HEK293 (cell line): ENCODE measurements at regions of chr20 and their contacts with region 1.

Region 1: DNA sequence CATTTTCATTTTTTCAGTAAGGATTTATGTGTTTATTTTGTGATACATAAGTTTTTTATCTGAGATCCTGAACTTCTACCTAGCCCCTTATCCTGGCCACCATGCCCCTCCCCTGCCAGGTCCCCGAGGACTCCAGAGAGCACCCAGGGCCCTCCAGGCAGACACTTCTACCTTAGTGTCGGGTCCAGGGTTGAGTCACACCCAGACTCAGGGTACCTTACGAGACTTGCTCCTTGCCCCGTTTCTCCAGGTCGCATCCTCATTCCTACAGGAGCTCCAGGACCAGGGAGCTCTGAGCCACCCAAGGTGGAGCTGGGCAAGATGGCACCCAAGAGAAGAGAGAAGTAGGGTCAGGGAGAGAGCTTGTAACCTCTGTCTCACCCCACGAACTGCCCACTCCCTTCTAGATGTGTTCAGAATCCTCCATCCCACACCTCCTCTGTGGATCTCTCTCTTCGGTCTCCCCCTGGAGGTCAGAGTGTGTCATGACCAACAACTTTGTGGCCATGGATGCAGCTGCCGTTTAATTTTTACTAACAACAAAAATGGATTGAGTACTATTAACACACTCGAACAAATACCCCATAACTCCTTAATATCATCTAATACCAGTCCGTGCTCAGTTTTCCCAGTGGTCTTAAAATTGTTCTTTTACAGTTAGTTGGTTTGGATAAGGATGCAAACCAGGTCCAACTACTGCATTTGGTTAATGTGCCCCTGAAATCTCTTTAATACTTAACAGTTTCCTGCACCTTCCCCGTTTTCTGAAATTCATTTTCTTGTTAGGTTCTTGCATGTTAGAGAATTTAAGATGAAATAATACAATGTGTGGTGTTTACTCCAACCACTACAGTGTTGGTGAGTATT is 130.6 kb upstream of the INSM1 start:
- H3K4me3 ChIP-seq: no peak overlapping the region
- H3K27ac ChIP-seq: no peak overlapping the region
- H3K4me1 ChIP-seq: no peaks in the 10 kb centered on the region
- CTCF ChIP-seq: no peak

Region 2: DNA sequence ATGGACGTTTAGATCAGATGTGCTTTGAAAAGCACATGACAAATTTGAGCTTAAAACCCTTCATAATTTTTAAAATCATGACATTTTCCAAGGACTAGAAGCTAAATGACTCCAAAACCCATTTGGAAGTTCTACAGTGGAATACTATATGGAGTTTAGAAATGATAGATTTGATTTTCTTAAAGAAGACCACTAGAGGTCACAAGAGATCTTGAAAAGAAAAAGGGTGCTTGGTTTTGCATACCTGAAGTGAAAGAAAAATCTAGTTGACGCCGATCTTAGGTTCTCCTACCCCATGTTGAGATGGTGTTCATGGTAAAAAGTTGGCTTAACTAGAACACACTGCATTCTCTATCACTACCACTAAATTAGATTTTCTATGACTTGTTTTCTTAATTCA is 153.5 kb before region 1 on chr20:
- CTCF ChIA-PET with region 1: interaction called, 47 read pairs
- POLR2A ChIA-PET with region 1: no interaction called
- H3K4me3 ChIP-seq: no peak overlapping the region
- H3K27ac ChIP-seq: no peak overlapping the region
- H3K4me1 ChIP-seq: no peaks in the 10 kb centered on the region
- CTCF ChIP-seq: 0 out of 2 replicates have a peak, but pooled peaks have one; percentile 28

Region 3: DNA sequence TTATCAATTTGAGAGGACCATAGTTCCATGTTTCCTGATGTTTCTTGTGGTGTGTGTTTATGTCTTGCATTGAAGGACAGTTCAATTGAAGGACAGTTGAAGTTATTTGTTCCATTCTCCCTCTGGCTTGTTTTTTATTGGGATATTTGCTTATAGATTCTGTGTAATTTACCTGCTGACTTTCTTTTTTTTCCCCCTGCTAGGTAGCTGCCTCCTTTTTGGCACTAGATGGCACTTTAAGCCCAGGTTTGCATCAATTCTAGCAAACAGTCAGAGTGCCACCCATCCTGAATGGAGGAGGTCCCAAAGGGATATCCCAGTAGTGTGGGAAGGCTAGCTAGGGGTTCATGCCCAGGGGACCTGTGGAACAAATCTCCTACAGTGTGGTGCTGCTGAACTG is 106.9 kb before region 1 on chr20:
- CTCF ChIA-PET with region 1: interaction called, 26 read pairs
- POLR2A ChIA-PET with region 1: no interaction called
- H3K4me3 ChIP-seq: no peak overlapping the region
- H3K27ac ChIP-seq: no peak overlapping the region
- H3K4me1 ChIP-seq: no peaks in the 10 kb centered on the region
- CTCF ChIP-seq: peak; percentile 62; the same call in 1 of the 2 replicates

Region 4: DNA sequence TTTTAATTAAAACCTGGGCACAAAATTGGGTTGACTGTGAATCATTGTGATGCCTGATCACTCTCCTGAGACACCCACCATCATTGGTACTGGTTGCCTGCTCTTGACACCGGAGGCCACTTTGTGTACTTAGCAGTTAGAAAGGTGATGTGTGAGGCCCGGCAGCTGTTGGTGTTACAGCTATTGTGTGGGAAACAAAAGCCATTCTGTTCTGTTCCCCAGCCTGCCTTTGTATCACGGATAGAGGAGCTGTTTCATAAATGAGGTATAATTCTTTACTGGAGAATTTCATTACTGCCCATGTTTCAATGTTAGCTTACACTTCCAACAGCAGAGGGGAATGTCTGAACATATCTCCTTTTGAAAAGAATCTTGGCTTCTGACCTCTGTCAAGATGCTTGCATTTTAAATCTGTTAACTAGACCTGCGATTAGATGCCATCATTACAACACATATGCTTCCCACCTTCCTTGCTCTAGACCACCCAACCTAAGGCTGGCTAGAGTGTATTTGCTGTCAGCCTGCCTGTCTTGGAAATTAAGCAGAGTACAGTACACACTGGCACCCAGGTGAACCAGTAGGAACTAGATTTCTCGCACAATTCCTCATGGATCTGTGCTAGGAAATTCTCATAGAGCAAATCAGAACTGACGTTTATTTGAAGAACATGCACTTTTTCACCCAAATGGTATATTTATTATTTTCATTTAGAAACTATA is 11.8 kb before region 1 on chr20:
- CTCF ChIA-PET with region 1: interaction called, 22 read pairs
- POLR2A ChIA-PET with region 1: no interaction called
- H3K4me3 ChIP-seq: no peak overlapping the region
- H3K27ac ChIP-seq: no peak overlapping the region
- H3K4me1 ChIP-seq: no peaks in the 10 kb centered on the region
- CTCF ChIP-seq: no peak

Region 5: DNA sequence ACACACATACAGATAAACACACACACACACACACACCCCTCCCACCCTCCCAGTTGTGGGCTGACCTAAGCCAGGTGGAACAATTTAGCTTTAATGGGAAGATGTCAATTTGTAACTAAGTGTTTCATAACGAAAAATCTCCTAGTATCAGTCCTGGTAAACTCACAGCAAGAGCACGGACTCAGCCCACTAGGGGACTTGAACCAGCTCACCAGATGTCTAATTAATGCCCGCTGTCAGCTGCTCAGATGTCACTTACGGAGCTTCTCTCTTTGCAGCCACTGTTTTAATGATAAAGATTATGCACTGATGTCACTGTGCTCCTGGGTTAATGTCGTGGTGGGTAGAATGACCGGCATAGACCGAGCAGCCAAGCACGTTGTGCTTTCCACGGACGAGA is 14.0 kb after region 1 on chr20:
- CTCF ChIA-PET with region 1: interaction called, 21 read pairs
- POLR2A ChIA-PET with region 1: no interaction called
- H3K4me3 ChIP-seq: no peak overlapping the region
- H3K27ac ChIP-seq: no peak overlapping the region
- H3K4me1 ChIP-seq: no peaks in the 10 kb centered on the region
- CTCF ChIP-seq: no peak